Gastrocnemius medialis (tissue), 4 donors: ENCODE measurements at regions of chr3 and their contacts with region 1.

Region 1: GRCh38 chr3:50121416-50122032 is 32.8 kb downstream of the RBM5 start:
- DNase-seq: peak; percentile 45 to 66
- ATAC-seq: peak; percentile 89 to 91
- H3K4me3 ChIP-seq: no peak overlapping the region
- H3K27ac ChIP-seq: peak overlapping the region in 1 of 4 donors; percentile 22
- H3K4me1 ChIP-seq: peaks cover 3 to 5% of the 10 kb centered on the region in 2 donors
- H3K27me3 ChIP-seq: no peaks in the 10 kb centered on the region
- CTCF ChIP-seq: peak; percentile 82 to 93 (median 87)
- POLR2A ChIP-seq: no peak

Region 2: GRCh38 chr3:50088725-50089608 is 32.6 kb before region 1 on chr3 and contains the start of gene RBM5:
- in situ Hi-C with region 1: no loop called
- intact Hi-C with region 1: no loop called
- DNase-seq: peak; percentile 92
- ATAC-seq: peak; percentile 98 to 99
- H3K4me3 ChIP-seq: peak within 1 kb of the TSS; percentile 85 to 100 (median 96)
- H3K27ac ChIP-seq: peak within 1 kb of the TSS; percentile 97 to 99 (median 98)
- H3K4me1 ChIP-seq: peaks cover 19 to 21% of the 10 kb centered on the region in 2 donors
- H3K27me3 ChIP-seq: no peaks in the 10 kb centered on the region
- CTCF ChIP-seq: no peak
- POLR2A ChIP-seq: peak; percentile 79 to 82
- total RNA-seq, gene RBM5: 41.1 to 108 (median 48.2) TPM

Region 3: DNA sequence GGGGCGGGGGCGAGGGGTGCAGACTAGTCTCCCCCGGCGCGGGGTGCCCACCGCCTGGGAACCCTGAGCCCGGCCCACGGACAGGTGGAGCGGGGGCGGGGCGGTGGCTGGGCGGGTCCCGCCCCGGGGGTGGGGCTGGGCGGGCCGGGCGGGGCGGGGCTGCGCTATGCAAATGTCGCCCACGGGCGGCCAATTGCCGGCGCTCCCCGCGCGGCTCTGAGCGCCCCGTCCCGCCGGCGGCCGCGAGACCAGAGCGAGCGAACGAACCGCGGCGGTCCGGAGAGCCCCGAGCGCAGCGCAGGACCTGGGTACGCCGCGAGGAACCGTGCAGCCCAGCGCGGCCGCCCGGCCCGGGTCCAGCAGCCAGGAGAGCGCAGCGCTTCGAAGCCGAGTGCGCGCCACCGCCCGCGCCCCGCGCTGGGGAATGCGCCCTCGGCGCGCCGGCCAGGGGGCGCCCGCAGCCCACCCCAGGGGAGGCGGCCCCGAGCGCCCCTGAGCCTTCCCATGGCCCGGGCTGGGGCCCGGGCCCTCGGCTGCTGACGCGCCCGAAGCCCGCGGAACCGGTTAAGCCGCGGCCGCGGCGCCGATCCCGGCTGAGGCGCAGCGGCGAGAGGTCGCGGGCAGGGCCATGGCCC is 33.4 kb after region 1 on chr3 and contains the start of gene SEMA3F:
- in situ Hi-C with region 1: no loop called
- intact Hi-C with region 1: loop called (anchors 2 kb)
- DNase-seq: peak; percentile 33 to 62
- ATAC-seq: peak; percentile 81 to 82
- H3K4me3 ChIP-seq: peak within 1 kb of the TSS; percentile 57 to 73 (median 64)
- H3K27ac ChIP-seq: peak within 1 kb of the TSS; percentile 64 to 82 (median 77)
- H3K4me1 ChIP-seq: peaks cover 14 to 18% of the 10 kb centered on the region in 2 donors
- H3K27me3 ChIP-seq: no peaks in the 10 kb centered on the region
- CTCF ChIP-seq: peak in 3 of 5 experiments; percentile 40 to 55 (median 51)
- POLR2A ChIP-seq: peak; percentile 68 to 79
- total RNA-seq, gene SEMA3F: 5.2 to 40.1 (median 7.5) TPM

Region 4: GRCh38 chr3:50487181-50487580 is 365.7 kb after region 1 on chr3:
- in situ Hi-C with region 1: no loop called
- intact Hi-C with region 1: no loop called
- DNase-seq: no peak
- ATAC-seq: no peak
- H3K4me3 ChIP-seq: no peak overlapping the region
- H3K27ac ChIP-seq: no peak overlapping the region
- H3K4me1 ChIP-seq: peaks cover 0 to 5% of the 10 kb centered on the region in 2 donors
- H3K27me3 ChIP-seq: no peaks in the 10 kb centered on the region
- CTCF ChIP-seq: no peak
- POLR2A ChIP-seq: no peak